ENCODE measurements at regions of chr1 and their contacts with region 1.

Region 1: GRCh38 chr1:235227414-235227813 is 66.4 kb upstream of the RBM34 start:
- DNase-seq: no peak
- ATAC-seq: no peak
- H3K4me3 ChIP-seq: no peak overlapping the region
- H3K27ac ChIP-seq: no peak overlapping the region
- H3K4me1 ChIP-seq: no peaks in the 10 kb centered on the region
- CTCF ChIP-seq: no peak
- EP300 ChIP-seq: no peak
- POLR2A ChIP-seq: no peak
- RAD21 ChIP-seq: no peak

Region 2: DNA sequence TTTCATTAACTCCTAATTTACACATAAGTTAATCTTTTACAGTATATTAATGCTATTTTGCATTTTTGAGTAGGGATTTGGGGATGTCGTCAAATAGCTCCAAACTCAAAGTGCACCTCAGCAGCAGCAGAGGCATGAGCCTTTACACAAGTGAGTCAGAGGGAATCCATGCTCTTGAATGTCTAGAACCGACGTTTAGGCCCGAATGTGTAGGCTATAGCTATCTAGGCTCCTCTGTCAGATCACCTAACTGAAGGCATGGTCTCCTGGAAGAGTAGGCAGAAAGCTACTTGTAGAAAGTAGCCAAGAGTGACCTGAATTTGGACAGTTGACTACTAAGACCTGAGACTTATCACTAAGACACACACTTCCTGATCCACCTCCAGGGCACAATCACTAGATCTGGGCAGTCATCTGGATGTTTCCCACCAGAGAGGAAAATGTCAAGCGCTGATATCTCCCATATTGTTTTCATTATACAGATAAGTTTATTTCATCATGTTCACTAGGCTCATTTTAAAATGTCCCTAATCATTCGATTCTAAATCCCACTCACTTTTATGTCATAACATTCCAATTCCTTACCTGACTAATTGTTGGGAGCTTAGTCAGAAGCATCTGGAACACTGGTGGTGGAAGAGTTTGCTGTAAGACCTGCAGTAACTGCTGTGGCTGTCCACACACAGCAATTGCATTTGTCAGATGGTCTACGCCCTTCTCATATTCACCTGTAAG is 114.1 kb before region 1 on chr1:
- CTCF ChIA-PET with region 1: no interaction called
- POLR2A ChIA-PET with region 1: no interaction called
- DNase-seq: no peak
- ATAC-seq: no peak
- H3K4me3 ChIP-seq: no peak overlapping the region
- H3K27ac ChIP-seq: no peak overlapping the region; a peak in 1 of 6 replicates
- H3K4me1 ChIP-seq: peaks cover 15% of the 10 kb centered on the region; the same call in 2 of the 3 replicates
- CTCF ChIP-seq: no peak
- EP300 ChIP-seq: no peak
- POLR2A ChIP-seq: no peak
- RAD21 ChIP-seq: no peak

Region 3: GRCh38 chr1:235215453-235215852 is 12.0 kb before region 1 on chr1:
- CTCF ChIA-PET with region 1: no interaction called
- POLR2A ChIA-PET with region 1: no interaction called
- DNase-seq: no peak
- ATAC-seq: no peak
- H3K4me3 ChIP-seq: no peak overlapping the region
- H3K27ac ChIP-seq: no peak overlapping the region
- H3K4me1 ChIP-seq: no peaks in the 10 kb centered on the region
- CTCF ChIP-seq: no peak
- EP300 ChIP-seq: no peak
- POLR2A ChIP-seq: no peak
- RAD21 ChIP-seq: no peak

Region 4: DNA sequence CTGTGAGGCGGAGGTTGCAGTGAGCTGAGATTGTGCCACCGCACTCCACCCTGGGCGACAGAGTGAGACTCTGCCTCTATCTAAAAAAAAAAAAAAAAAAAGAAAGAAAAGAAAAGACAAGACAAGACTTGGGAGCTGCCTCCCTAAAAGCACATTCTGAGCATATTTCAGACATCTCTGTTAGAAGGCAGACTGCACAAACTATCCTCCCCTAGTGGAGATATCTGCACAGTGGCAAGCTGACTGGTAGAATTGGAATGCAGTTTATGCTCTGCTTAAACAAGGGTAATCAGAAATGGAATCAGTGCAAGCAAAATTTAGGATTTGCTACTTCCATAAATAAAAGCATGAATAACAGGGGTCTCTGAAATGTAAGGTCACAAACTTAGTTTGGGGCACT is 390.4 kb after region 1 on chr1:
- CTCF ChIA-PET with region 1: no interaction called
- POLR2A ChIA-PET with region 1: interaction called, 11 read pairs
- DNase-seq: no peak
- ATAC-seq: peak; percentile 80 to 83; a peak in 5 of 6 replicates
- H3K4me3 ChIP-seq: no peak overlapping the region
- H3K27ac ChIP-seq: peak overlapping the region in 1 of 2 experiments; percentile 0; a peak in 1 of 6 replicates
- H3K4me1 ChIP-seq: peaks cover 9% of the 10 kb centered on the region; the same call in 2 of the 3 replicates
- CTCF ChIP-seq: no peak
- EP300 ChIP-seq: no peak
- POLR2A ChIP-seq: no peak
- RAD21 ChIP-seq: 0 out of 5 replicates have a peak, but pooled peaks of 1 of the 2 experiments have one; percentile 10